ENCODE measurements at regions of chr13 and their contacts with region 1.

Region 1: GRCh38 chr13:51583875-51584730 is at the start of gene WDFY2:
- DNase-seq: peak; percentile 98 to 100 (median 99)
- ATAC-seq: peak; percentile 82
- H3K4me3 ChIP-seq: peak within 1 kb of the TSS; percentile 67
- H3K4me3 Mint-ChIP-seq: peak within 1 kb of the TSS; percentile 97
- H3K27ac ChIP-seq: peak within 1 kb of the TSS; percentile 88 to 90
- H3K27ac Mint-ChIP-seq: peak within 1 kb of the TSS; percentile 96
- H3K4me1 ChIP-seq: peaks cover 15% of the 10 kb centered on the region
- H3K4me1 Mint-ChIP-seq: peaks cover 41% of the 10 kb centered on the region
- H3K27me3 ChIP-seq: no peaks in the 10 kb centered on the region
- H3K27me3 Mint-ChIP-seq: no peaks in the 10 kb centered on the region
- CTCF ChIP-seq: no peak
- total RNA-seq, gene WDFY2: 21.4 to 21.9 TPM

Region 2: GRCh38 chr13:49936085-49936940 is 1647.8 kb before region 1 on chr13 and contains the start of gene SPRYD7:
- CTCF ChIA-PET with region 1: no interaction called
- POLR2A ChIA-PET with region 1: no interaction called
- intact Hi-C with region 1: loop called in 1 of 2 experiments (anchors 10 kb)
- DNase-seq: peak; percentile 86 to 97 (median 92)
- ATAC-seq: peak; percentile 82
- H3K4me3 ChIP-seq: peak within 1 kb of the TSS; percentile 91
- H3K4me3 Mint-ChIP-seq: peak within 1 kb of the TSS; percentile 98
- H3K27ac ChIP-seq: no peak within 1 kb of the TSS
- H3K27ac Mint-ChIP-seq: peak within 1 kb of the TSS; percentile 83
- H3K4me1 ChIP-seq: peaks cover 18% of the 10 kb centered on the region
- H3K4me1 Mint-ChIP-seq: peaks cover 19% of the 10 kb centered on the region
- H3K27me3 ChIP-seq: no peaks in the 10 kb centered on the region
- H3K27me3 Mint-ChIP-seq: no peaks in the 10 kb centered on the region
- CTCF ChIP-seq: peak; percentile 74
- total RNA-seq, gene SPRYD7: 1.1 to 1.5 TPM

Region 3: GRCh38 chr13:51614350-51614786 is 30.3 kb after region 1 on chr13:
- CTCF ChIA-PET with region 1: interaction called, 3 read pairs
- POLR2A ChIA-PET with region 1: interaction called, 32 read pairs
- intact Hi-C with region 1: loop called in 1 of 2 experiments (anchors 1 kb)
- DNase-seq: peak; percentile 7 to 75 (median 26)
- ATAC-seq: peak; percentile 96
- H3K4me3 ChIP-seq: peak overlapping the region; percentile 42
- H3K4me3 Mint-ChIP-seq: peak overlapping the region; percentile 89
- H3K27ac ChIP-seq: peak overlapping the region; percentile 34 to 78
- H3K27ac Mint-ChIP-seq: peak overlapping the region; percentile 89
- H3K4me1 ChIP-seq: peaks cover 5% of the 10 kb centered on the region
- H3K4me1 Mint-ChIP-seq: peaks cover 23% of the 10 kb centered on the region
- H3K27me3 ChIP-seq: no peaks in the 10 kb centered on the region
- H3K27me3 Mint-ChIP-seq: no peaks in the 10 kb centered on the region
- CTCF ChIP-seq: no peak

Region 4: GRCh38 chr13:51645154-51645650 is 61.1 kb after region 1 on chr13:
- CTCF ChIA-PET with region 1: no interaction called
- POLR2A ChIA-PET with region 1: interaction called, 21 read pairs
- intact Hi-C with region 1: loop called in 1 of 2 experiments (anchors 1 kb)
- DNase-seq: peak in 6 of 14 experiments; percentile 17 to 87 (median 68)
- ATAC-seq: peak; percentile 87
- H3K4me3 ChIP-seq: peak overlapping the region; percentile 12
- H3K4me3 Mint-ChIP-seq: peak overlapping the region; percentile 82
- H3K27ac ChIP-seq: peak overlapping the region; percentile 54 to 95
- H3K27ac Mint-ChIP-seq: peak overlapping the region; percentile 95
- H3K4me1 ChIP-seq: peaks cover 44% of the 10 kb centered on the region
- H3K4me1 Mint-ChIP-seq: peaks cover 55% of the 10 kb centered on the region
- H3K27me3 ChIP-seq: no peaks in the 10 kb centered on the region
- H3K27me3 Mint-ChIP-seq: no peaks in the 10 kb centered on the region
- CTCF ChIP-seq: no peak

Region 5: GRCh38 chr13:51803422-51804294 is 219.6 kb after region 1 on chr13 and contains the start of gene DHRS12:
- CTCF ChIA-PET with region 1: no interaction called
- POLR2A ChIA-PET with region 1: interaction called, 23 read pairs
- intact Hi-C with region 1: loop called (anchors 1 to 2 kb)
- DNase-seq: peak; percentile 75 to 97 (median 82)
- ATAC-seq: peak; percentile 73
- H3K4me3 ChIP-seq: peak within 1 kb of the TSS; percentile 81
- H3K4me3 Mint-ChIP-seq: peak within 1 kb of the TSS; percentile 97
- H3K27ac ChIP-seq: peak within 1 kb of the TSS; percentile 99
- H3K27ac Mint-ChIP-seq: peak within 1 kb of the TSS; percentile 99
- H3K4me1 ChIP-seq: peaks cover 58% of the 10 kb centered on the region
- H3K4me1 Mint-ChIP-seq: peaks cover 61% of the 10 kb centered on the region
- H3K27me3 ChIP-seq: no peaks in the 10 kb centered on the region
- H3K27me3 Mint-ChIP-seq: no peaks in the 10 kb centered on the region
- CTCF ChIP-seq: no peak
- total RNA-seq, gene DHRS12: 10.0 to 14.8 TPM

Region 6: GRCh38 chr13:51959773-51960172 is 375.7 kb after region 1 on chr13:
- CTCF ChIA-PET with region 1: no interaction called
- POLR2A ChIA-PET with region 1: no interaction called
- intact Hi-C with region 1: no loop called
- DNase-seq: no peak
- ATAC-seq: no peak
- H3K4me3 ChIP-seq: no peak overlapping the region
- H3K4me3 Mint-ChIP-seq: no peak overlapping the region
- H3K27ac ChIP-seq: no peak overlapping the region
- H3K27ac Mint-ChIP-seq: no peak overlapping the region
- H3K4me1 ChIP-seq: peaks cover 21% of the 10 kb centered on the region
- H3K4me1 Mint-ChIP-seq: peaks cover 6% of the 10 kb centered on the region
- H3K27me3 ChIP-seq: no peaks in the 10 kb centered on the region
- H3K27me3 Mint-ChIP-seq: no peaks in the 10 kb centered on the region
- CTCF ChIP-seq: no peak

Region 7: DNA sequence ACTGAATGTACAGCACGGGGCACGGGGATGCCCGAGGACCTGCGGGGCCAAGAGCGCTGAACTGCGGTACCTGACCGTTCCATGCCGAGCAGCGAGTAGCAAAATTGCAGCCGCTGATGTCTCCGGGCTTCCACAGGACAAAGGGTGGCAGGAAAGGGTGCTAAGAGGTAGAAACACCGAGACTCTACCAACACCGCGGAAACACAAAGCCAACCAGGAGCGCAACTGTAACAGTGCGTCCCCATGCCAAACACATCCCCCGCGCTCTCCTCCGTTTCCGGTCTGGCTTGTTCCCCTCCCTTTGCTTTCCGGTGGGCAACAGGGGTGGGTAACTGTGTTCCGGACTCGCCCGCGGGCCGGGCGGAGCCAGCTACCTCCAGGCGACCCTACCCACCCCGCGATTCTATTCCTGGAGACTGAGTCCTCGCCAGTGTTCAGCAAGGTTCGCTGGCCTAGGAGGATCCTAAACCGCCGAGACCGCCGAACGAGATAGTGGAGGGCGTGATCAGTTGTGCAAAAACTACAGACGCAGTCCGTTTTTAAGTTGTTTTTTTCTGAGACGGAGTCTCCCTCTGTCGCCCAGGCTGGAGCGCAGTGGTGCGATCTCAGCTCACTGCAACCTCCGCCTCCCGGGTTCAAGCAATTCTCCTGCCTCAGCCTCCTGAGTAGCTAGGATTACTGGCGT is 610.2 kb after region 1 on chr13:
- CTCF ChIA-PET with region 1: no interaction called
- POLR2A ChIA-PET with region 1: no interaction called
- intact Hi-C with region 1: loop called in 1 of 2 experiments (anchors 10 kb)
- DNase-seq: peak; percentile 77 to 91 (median 86)
- ATAC-seq: peak; percentile 80
- H3K4me3 ChIP-seq: peak overlapping the region; percentile 85
- H3K4me3 Mint-ChIP-seq: peak overlapping the region; percentile 97
- H3K27ac ChIP-seq: peak overlapping the region; percentile 48 to 59
- H3K27ac Mint-ChIP-seq: peak overlapping the region; percentile 95
- H3K4me1 ChIP-seq: peaks cover 23% of the 10 kb centered on the region
- H3K4me1 Mint-ChIP-seq: peaks cover 33% of the 10 kb centered on the region
- H3K27me3 ChIP-seq: no peaks in the 10 kb centered on the region
- H3K27me3 Mint-ChIP-seq: no peaks in the 10 kb centered on the region
- CTCF ChIP-seq: no peak

Measured in CD4-positive, alpha-beta T cell (primary cell).